Activated B cell treated with CpG ODN at 0.5 μM for 24 hours (primary cell): ENCODE measurements at regions of chr4 and their contacts with region 1.

Region 1: GRCh38 chr4:145936142-145936996 is 2.3 kb downstream of the ZNF827 start:
- DNase-seq: peak; percentile 57
- ATAC-seq: peak; percentile 49
- H3K4me3 Mint-ChIP-seq: peak overlapping the region; percentile 96
- H3K27ac Mint-ChIP-seq: peak overlapping the region; percentile 92
- H3K4me1 Mint-ChIP-seq: peaks cover 49% of the 10 kb centered on the region
- H3K27me3 Mint-ChIP-seq: no peaks in the 10 kb centered on the region
- CTCF ChIP-seq: no peak

Region 2: DNA sequence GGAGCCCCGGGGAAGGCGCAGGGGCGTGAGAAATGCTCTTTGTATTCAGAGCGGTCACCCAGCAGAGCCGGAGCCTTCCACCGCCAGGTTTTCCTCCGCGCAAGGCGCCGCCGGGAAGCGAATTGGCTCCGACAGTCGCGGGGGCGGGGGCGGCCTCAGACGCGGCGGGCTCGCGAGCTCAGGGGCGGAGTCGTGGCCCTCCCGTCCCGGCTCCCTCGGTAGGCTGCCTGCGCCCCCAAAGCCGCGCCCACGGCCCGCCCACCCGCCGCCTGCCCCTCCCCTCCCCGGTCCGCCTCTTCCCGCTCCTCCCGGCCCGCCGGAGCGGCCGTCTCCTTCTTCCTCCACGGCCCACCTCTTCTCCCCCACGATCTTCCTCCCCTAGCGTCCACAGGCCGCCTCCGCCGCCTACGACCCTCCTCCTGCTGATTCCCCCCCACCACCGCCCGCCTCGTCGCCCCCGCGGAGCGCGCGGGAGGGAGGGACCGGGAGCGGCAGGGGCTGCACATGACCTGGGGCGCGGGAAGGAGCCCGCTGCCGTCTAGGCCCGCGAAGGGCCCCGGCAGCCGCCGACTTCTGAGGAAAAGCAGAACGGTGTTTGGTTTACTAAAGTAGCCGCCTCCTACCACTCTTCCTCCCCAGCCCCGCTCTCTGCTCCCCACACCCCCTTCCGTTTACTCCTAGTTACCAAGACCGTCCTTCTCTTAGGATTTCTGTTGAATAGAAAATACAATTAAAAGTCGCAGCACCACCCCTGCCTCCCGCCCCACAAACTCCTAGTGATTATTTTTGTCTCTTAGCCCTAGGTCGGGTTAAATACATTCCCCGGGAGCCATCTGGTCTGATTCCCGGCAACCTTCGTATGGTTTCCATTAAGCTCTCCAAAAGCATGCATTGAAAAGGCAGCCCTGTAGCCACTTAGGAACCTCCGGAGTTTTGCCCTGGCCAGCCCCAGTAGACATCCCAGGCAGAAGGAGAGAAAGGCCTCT is 203.2 kb before region 1 on chr4:
- CTCF ChIA-PET with region 1: no interaction called
- POLR2A ChIA-PET with region 1: interaction called, 9 read pairs
- intact Hi-C with region 1: loop called (anchors 2 kb)
- DNase-seq: peak; percentile 72
- ATAC-seq: peak; percentile 97
- H3K4me3 Mint-ChIP-seq: peak overlapping the region; percentile 85
- H3K27ac Mint-ChIP-seq: no peak overlapping the region
- H3K4me1 Mint-ChIP-seq: peaks cover 11% of the 10 kb centered on the region
- H3K27me3 Mint-ChIP-seq: peaks cover 10% of the 10 kb centered on the region
- CTCF ChIP-seq: no peak

Region 3: GRCh38 chr4:145887241-145887991 is 49.0 kb before region 1 on chr4:
- CTCF ChIA-PET with region 1: no interaction called
- POLR2A ChIA-PET with region 1: no interaction called
- intact Hi-C with region 1: loop called (anchors 5 kb)
- DNase-seq: no peak
- ATAC-seq: no peak
- H3K4me3 Mint-ChIP-seq: no peak overlapping the region
- H3K27ac Mint-ChIP-seq: no peak overlapping the region
- H3K4me1 Mint-ChIP-seq: peaks cover 50% of the 10 kb centered on the region
- H3K27me3 Mint-ChIP-seq: no peaks in the 10 kb centered on the region
- CTCF ChIP-seq: no peak

Region 4: GRCh38 chr4:146049802-146050201 is 113.4 kb after region 1 on chr4:
- CTCF ChIA-PET with region 1: no interaction called
- POLR2A ChIA-PET with region 1: interaction called, 10 read pairs
- intact Hi-C with region 1: no loop called
- DNase-seq: no peak
- ATAC-seq: peak; percentile 90
- H3K4me3 Mint-ChIP-seq: peak overlapping the region; percentile 50
- H3K27ac Mint-ChIP-seq: peak overlapping the region; percentile 81
- H3K4me1 Mint-ChIP-seq: peaks cover 73% of the 10 kb centered on the region
- H3K27me3 Mint-ChIP-seq: no peaks in the 10 kb centered on the region
- CTCF ChIP-seq: no peak

Region 5: DNA sequence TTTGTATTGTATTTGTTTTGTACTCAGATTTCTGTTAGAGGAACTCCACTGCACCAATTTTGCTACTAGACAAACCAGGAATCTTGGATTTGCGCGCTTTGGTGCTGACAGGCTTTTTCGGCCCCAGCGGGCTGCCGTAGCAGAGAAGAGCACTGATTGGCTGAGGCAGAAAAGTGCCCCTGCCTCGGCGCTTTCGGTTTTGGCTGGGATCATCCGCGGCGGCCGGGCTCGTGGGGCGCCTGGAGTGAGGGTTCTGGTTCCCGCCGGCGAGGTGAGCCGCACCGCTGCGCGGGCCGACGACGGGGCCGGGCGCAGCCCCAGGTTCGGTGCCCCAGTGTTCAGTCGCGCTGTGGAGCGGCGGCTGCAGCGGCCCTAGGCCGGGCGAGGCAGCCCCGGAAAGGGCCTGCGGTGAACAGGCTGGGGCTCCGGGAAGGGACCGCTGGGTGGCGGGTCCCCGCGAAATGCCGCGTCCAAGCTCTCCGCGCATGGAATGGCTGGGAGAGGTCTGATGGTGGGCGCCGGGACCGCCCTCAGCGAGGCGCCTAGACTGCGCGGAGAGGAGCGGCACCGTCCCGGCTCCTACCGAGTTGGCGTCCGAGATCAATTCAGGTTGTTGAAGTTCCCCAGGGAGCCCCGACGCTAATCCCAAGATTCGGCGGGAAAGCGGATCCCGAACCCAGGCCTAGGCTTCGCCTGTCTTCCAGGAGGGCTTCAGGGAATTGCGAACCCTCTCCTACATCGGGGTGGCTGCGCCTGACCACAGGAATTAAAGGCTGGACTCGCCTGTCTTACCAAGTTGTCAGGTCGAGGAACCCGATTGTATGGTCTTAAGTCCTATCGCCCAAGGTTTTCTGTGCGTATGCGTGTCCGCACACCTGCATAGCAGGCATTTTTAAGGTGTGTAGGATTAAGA is 239.4 kb after region 1 on chr4 and contains the start of gene LSM6:
- CTCF ChIA-PET with region 1: no interaction called
- POLR2A ChIA-PET with region 1: interaction called, 3 read pairs
- intact Hi-C with region 1: loop called (anchors 1 kb)
- DNase-seq: peak; percentile 75
- ATAC-seq: peak; percentile 93
- H3K4me3 Mint-ChIP-seq: peak within 1 kb of the TSS; percentile 87
- H3K27ac Mint-ChIP-seq: peak within 1 kb of the TSS; percentile 90
- H3K4me1 Mint-ChIP-seq: peaks cover 44% of the 10 kb centered on the region
- H3K27me3 Mint-ChIP-seq: no peaks in the 10 kb centered on the region
- CTCF ChIP-seq: no peak
- total RNA-seq, gene LSM6: 57.4 and 59.7 TPM in 2 replicates

Region 6: GRCh38 chr4:147056940-147057610 is 1120.7 kb after region 1 on chr4:
- CTCF ChIA-PET with region 1: no interaction called
- POLR2A ChIA-PET with region 1: interaction called, 3 read pairs
- intact Hi-C with region 1: loop called (anchors 5 kb)
- DNase-seq: no peak
- ATAC-seq: no peak
- H3K4me3 Mint-ChIP-seq: peak overlapping the region; percentile 83
- H3K27ac Mint-ChIP-seq: peak overlapping the region; percentile 85
- H3K4me1 Mint-ChIP-seq: peaks cover 25% of the 10 kb centered on the region
- H3K27me3 Mint-ChIP-seq: peaks cover 8% of the 10 kb centered on the region
- CTCF ChIP-seq: no peak